ENCODE measurements at regions of chr20 and their contacts with region 1.

Region 1: DNA sequence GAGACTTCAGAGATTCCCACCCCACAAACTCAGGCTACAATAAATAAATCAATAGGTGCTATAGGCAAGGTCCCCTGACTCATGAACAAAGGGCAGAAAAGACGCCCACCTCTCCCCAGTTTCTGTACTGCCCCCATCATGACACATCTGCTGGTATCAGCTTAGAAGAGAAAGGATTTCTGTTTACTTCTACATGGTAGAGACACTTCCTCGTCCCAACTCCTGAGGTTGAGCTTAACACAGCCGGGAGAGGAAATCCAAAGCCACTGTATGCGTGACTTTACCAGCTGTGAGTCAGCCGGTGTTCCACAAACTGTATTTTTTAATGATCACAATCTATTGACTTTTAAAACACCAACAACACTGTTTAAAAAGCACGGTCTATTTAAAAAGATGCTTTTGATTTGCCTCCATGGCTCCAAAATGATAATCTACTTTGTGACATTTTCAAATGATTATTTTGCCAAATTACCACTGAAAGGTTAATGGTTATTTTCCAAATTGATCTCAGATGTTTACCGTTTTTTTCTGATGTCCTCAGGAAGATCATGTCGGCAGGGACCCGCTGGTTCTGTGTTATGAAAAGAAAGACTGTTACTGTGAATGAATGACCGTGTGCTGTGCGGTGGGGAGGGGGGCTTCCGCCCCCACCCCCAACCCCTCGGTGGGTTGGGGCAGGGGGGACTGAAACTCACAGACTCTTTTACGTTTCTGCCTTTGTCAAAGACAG is 72.5 kb downstream of the ATP9A start:
- DNase-seq: peak; percentile 22 to 46
- ATAC-seq: peak; percentile 48 to 56; a peak in 2 of 6 replicates
- H3K4me3 ChIP-seq: no peak overlapping the region
- H3K27ac ChIP-seq: peak overlapping the region; percentile 56 to 80
- H3K4me1 ChIP-seq: peaks cover 25% of the 10 kb centered on the region
- CTCF ChIP-seq: no peak
- EP300 ChIP-seq: no peak
- POLR2A ChIP-seq: no peak
- RAD21 ChIP-seq: no peak

Region 2: GRCh38 chr20:51639206-51639832 is 56.4 kb before region 1 on chr20:
- CTCF ChIA-PET with region 1: interaction called, 15 read pairs
- POLR2A ChIA-PET with region 1: no interaction called
- DNase-seq: peak; percentile 74 to 79
- ATAC-seq: peak; percentile 90 to 93
- H3K4me3 ChIP-seq: no peak overlapping the region
- H3K27ac ChIP-seq: peak overlapping the region; percentile 50 to 78; a peak in 5 of 6 replicates
- H3K4me1 ChIP-seq: peaks cover 13% of the 10 kb centered on the region; the same call in 1 of the 3 replicates
- CTCF ChIP-seq: peak; percentile 92
- EP300 ChIP-seq: no peak
- POLR2A ChIP-seq: no peak
- RAD21 ChIP-seq: peak; percentile 97 to 98

Region 3: GRCh38 chr20:51742685-51743357 is 47.1 kb after region 1 on chr20:
- CTCF ChIA-PET with region 1: interaction called, 12 read pairs
- POLR2A ChIA-PET with region 1: no interaction called
- DNase-seq: peak; percentile 55 to 75
- ATAC-seq: peak; percentile 53 to 69
- H3K4me3 ChIP-seq: no peak overlapping the region
- H3K27ac ChIP-seq: peak overlapping the region; percentile 81 to 89
- H3K4me1 ChIP-seq: peaks cover 51% of the 10 kb centered on the region
- CTCF ChIP-seq: no peak
- EP300 ChIP-seq: no peak
- POLR2A ChIP-seq: no peak
- RAD21 ChIP-seq: no peak

Region 4: DNA sequence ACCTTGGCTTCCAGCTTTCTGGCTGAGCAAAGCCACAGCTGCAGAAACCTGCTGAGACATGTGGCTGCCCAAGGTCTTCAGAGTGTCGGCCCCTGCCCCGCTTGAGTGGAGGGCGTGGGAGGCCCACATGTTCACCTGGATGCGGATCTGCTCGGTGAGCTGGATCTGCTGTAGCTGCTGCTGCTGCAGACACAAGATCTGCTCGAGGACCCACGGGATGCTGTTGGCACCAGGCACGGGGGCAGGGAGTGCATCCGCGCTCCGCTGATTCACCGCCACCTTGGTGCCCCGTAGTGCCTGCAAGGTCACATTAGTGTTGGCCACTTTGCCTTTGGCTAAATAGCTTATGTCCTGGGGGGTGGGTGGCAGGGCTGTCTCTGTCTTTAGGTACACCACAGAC is 95.9 kb after region 1 on chr20:
- CTCF ChIA-PET with region 1: interaction called, 19 read pairs
- POLR2A ChIA-PET with region 1: no interaction called
- DNase-seq: no peak
- ATAC-seq: no peak
- H3K4me3 ChIP-seq: no peak overlapping the region
- H3K27ac ChIP-seq: no peak overlapping the region
- H3K4me1 ChIP-seq: no peaks in the 10 kb centered on the region
- CTCF ChIP-seq: no peak
- EP300 ChIP-seq: no peak
- POLR2A ChIP-seq: no peak
- RAD21 ChIP-seq: no peak

Region 5: GRCh38 chr20:52060794-52061714 is 365.3 kb after region 1 on chr20:
- CTCF ChIA-PET with region 1: interaction called, 11 read pairs
- POLR2A ChIA-PET with region 1: no interaction called
- DNase-seq: peak; percentile 20 to 70
- ATAC-seq: peak; percentile 81
- H3K4me3 ChIP-seq: no peak overlapping the region
- H3K27ac ChIP-seq: peak overlapping the region in 1 of 2 experiments; percentile 53; a peak in 2 of 6 replicates
- H3K4me1 ChIP-seq: no peaks in the 10 kb centered on the region
- CTCF ChIP-seq: peak; percentile 42; the same call in 2 of the 3 replicates
- EP300 ChIP-seq: no peak
- POLR2A ChIP-seq: no peak
- RAD21 ChIP-seq: peak; percentile 69 to 73

Measured in A549 (cell line).